ENCODE measurements at regions of chr19 and their contacts with region 1.

Region 1: DNA sequence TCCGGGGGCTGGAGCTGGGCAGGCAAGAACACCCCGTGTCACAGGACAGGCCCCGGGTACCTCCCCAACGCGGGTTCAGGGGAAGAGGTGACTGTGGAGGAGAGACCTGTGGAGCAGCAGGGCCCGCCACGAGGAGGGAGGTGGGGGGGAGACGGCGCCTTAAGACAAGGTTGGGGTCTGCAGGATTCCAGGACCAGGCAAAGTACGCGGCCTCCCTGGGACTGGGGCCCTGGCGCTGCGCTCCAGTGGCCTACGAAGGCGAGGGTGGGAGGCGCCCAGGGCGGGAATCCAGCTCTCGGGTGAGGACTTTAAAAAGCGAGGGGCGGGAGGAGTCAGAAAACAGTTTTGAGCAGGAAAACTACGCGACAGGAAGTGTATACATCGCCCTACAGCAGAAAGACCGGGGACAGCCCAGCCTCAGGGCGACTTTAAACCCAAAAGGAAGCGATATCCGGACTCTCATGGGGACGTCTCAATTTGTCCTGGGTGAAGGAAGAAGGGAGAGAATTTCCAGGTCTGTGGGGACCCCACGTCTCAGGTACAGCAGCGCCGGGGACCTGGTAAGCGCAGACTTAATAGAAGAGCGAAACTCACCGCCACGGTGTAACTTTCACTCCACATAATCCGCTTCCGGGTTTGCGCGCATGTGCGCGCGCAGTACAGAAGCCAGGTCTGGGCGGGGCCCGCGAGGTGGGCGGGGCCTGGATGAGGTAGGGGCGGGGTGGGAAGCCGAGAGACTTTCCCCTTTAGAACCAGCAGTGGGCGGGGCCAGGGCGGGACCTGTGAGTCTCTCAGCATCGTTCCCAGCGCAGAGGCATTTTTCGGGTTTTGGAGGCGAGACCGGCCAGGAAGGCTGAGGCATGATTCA is at the start of gene ZNF83:
- DNase-seq: peak; percentile 98
- ATAC-seq: peak; percentile 86
- H3K4me3 ChIP-seq: peak within 1 kb of the TSS; percentile 78
- H3K27ac ChIP-seq: peak within 1 kb of the TSS; percentile 88
- H3K4me1 ChIP-seq: peaks cover 7% of the 10 kb centered on the region; the same call in 1 of the 2 replicates
- H3K27me3 ChIP-seq: no peaks in the 10 kb centered on the region
- CTCF ChIP-seq: no peak
- total RNA-seq, gene ZNF83: 32.9 and 45.4 TPM in 2 replicates

Region 2: DNA sequence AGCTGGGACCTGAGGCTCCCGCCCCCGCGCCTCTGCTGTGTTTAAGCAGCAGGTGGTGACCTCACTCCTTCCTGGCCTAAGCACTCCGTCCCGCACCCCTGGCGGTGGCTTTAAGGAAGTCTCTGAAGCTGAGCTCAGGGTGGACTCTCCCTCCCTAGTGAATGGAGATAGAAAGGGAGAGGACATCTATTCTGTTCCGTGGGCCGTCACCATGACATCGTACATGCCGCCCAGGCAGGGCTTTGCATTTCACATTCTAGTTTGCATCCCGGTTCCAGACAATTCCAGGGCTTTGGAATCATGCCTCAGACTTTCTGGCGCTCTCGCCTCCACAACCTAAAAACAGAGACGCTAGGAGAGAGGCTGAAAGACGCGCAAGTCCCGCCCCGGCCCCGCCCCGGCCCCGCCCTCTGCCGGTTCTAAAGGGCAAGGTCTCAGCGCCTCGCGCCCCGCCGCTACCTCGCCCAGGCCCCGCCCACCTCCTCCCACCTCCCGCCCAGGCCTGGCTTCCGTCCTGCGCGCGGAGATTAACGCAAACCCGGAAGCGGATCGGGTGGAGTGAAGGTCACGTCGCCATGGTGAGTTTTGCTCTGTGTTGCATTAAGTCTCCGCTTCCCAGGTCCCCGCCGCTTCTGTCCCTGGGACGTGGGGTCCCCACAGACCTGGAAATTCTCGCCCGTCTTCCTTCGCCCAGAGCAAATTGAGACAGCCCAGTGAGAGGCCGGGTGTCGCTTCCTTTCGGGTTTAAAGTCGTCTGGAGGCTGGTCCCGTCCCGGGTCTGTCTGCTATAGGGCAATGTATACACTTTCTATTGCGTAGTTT is 110.6 kb before region 1 on chr19 and contains the start of gene ZNF808:
- CTCF ChIA-PET with region 1: no interaction called
- POLR2A ChIA-PET with region 1: no interaction called
- intact Hi-C with region 1: loop called (anchors 1 kb)
- DNase-seq: peak; percentile 93
- ATAC-seq: peak; percentile 91
- H3K4me3 ChIP-seq: peak within 1 kb of the TSS; percentile 98
- H3K27ac ChIP-seq: peak within 1 kb of the TSS; percentile 63
- H3K4me1 ChIP-seq: 0 out of 2 replicates have a peak, but pooled peaks cover 10% of the 10 kb centered on the region
- H3K27me3 ChIP-seq: no peaks in the 10 kb centered on the region
- CTCF ChIP-seq: peak; percentile 71
- total RNA-seq, gene ZNF808: 9.4 and 14.3 TPM in 2 replicates

Region 3: GRCh38 chr19:52690369-52691214 is 52.6 kb after region 1 on chr19:
- CTCF ChIA-PET with region 1: no interaction called
- POLR2A ChIA-PET with region 1: no interaction called
- intact Hi-C with region 1: loop called (anchors 5 kb)
- DNase-seq: peak; percentile 97
- ATAC-seq: peak; percentile 98
- H3K4me3 ChIP-seq: peak overlapping the region; percentile 99
- H3K27ac ChIP-seq: peak overlapping the region; percentile 81
- H3K4me1 ChIP-seq: peaks cover 32% of the 10 kb centered on the region
- H3K27me3 ChIP-seq: no peaks in the 10 kb centered on the region
- CTCF ChIP-seq: no peak

Region 4: GRCh38 chr19:52722062-52723003 is 84.4 kb after region 1 on chr19:
- CTCF ChIA-PET with region 1: no interaction called
- POLR2A ChIA-PET with region 1: no interaction called
- intact Hi-C with region 1: loop called (anchors 5 kb)
- DNase-seq: peak; percentile 99
- ATAC-seq: peak; percentile 93
- H3K4me3 ChIP-seq: no peak overlapping the region; the same call in 1 of the 2 replicates
- H3K27ac ChIP-seq: peak overlapping the region; percentile 87
- H3K4me1 ChIP-seq: peaks cover 21% of the 10 kb centered on the region
- H3K27me3 ChIP-seq: no peaks in the 10 kb centered on the region
- CTCF ChIP-seq: no peak

Region 5: GRCh38 chr19:52748336-52748950 is 110.5 kb after region 1 on chr19:
- CTCF ChIA-PET with region 1: no interaction called
- POLR2A ChIA-PET with region 1: no interaction called
- intact Hi-C with region 1: loop called (anchors 1 kb)
- DNase-seq: peak; percentile 67
- ATAC-seq: peak; percentile 62
- H3K4me3 ChIP-seq: no peak overlapping the region
- H3K27ac ChIP-seq: no peak overlapping the region
- H3K4me1 ChIP-seq: no peaks in the 10 kb centered on the region
- H3K27me3 ChIP-seq: no peaks in the 10 kb centered on the region
- CTCF ChIP-seq: peak; percentile 73

Measured in PC-3 (cell line).